Endothelial cell of umbilical vein (primary cell): ENCODE measurements at regions of chr7 and their contacts with region 1.

Region 1: GRCh38 chr7:88789480-88790064 is 6.0 kb downstream of the TEX47 start:
- DNase-seq: peak; percentile 42
- H3K4me3 ChIP-seq: no peak overlapping the region
- H3K27ac ChIP-seq: no peak overlapping the region
- H3K4me1 ChIP-seq: no peaks in the 10 kb centered on the region
- H3K27me3 ChIP-seq: peaks cover 2 to 3% of the 10 kb centered on the region in 2 experiments
- CTCF ChIP-seq: peak; percentile 14 to 24
- POLR2A ChIP-seq: no peak

Region 2: DNA sequence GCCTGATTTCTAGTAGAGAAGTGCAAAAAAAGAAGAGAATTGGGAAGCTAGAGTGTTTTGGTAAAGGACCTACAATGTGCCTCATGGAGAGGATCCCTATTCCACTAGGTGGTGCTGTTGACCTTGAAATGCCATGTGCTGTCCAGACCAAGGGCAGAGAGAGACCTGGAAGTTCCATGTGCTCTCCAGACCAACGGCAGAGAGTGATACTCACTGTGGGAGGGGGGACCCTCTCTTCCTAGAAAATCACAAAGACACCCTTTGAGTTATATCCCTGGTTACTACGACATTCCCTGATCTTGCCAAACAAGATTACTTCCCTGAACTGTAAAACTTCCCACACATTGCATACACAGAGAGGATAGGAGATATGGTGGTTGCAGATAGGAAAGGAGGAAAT is 242.8 kb before region 1 on chr7:
- CTCF ChIA-PET with region 1: interaction called, 6 read pairs
- POLR2A ChIA-PET with region 1: no interaction called
- dilution Hi-C with region 1: no loop called
- intact Hi-C with region 1: loop called (anchors 5 kb)
- DNase-seq: peak; percentile 68
- H3K4me3 ChIP-seq: no peak overlapping the region
- H3K27ac ChIP-seq: no peak overlapping the region
- H3K4me1 ChIP-seq: no peaks in the 10 kb centered on the region
- H3K27me3 ChIP-seq: no peaks in the 10 kb centered on the region
- CTCF ChIP-seq: peak; percentile 62 to 64
- POLR2A ChIP-seq: no peak

Region 3: GRCh38 chr7:88818552-88818951 is 29.0 kb after region 1 on chr7:
- CTCF ChIA-PET with region 1: no interaction called
- POLR2A ChIA-PET with region 1: no interaction called
- dilution Hi-C with region 1: no loop called
- intact Hi-C with region 1: no loop called
- DNase-seq: no peak
- H3K4me3 ChIP-seq: no peak overlapping the region
- H3K27ac ChIP-seq: no peak overlapping the region
- H3K4me1 ChIP-seq: no peaks in the 10 kb centered on the region
- H3K27me3 ChIP-seq: no peaks in the 10 kb centered on the region
- CTCF ChIP-seq: no peak
- POLR2A ChIP-seq: no peak

Region 4: GRCh38 chr7:89772276-89772675 is 982.7 kb after region 1 on chr7:
- CTCF ChIA-PET with region 1: interaction called, 3 read pairs
- POLR2A ChIA-PET with region 1: no interaction called
- dilution Hi-C with region 1: no loop called
- intact Hi-C with region 1: loop called (anchors 2 kb)
- DNase-seq: no peak
- H3K4me3 ChIP-seq: no peak overlapping the region
- H3K27ac ChIP-seq: no peak overlapping the region
- H3K4me1 ChIP-seq: peaks cover 4% of the 10 kb centered on the region
- H3K27me3 ChIP-seq: no peaks in the 10 kb centered on the region
- CTCF ChIP-seq: no peak
- POLR2A ChIP-seq: no peak

Region 5: GRCh38 chr7:90119178-90119971 is 1329.8 kb after region 1 on chr7:
- CTCF ChIA-PET with region 1: no interaction called
- POLR2A ChIA-PET with region 1: no interaction called
- dilution Hi-C with region 1: no loop called
- intact Hi-C with region 1: loop called (anchors 10 kb)
- DNase-seq: no peak
- H3K4me3 ChIP-seq: peak overlapping the region in 2 of 3 experiments; percentile 2 to 6
- H3K27ac ChIP-seq: no peak overlapping the region
- H3K4me1 ChIP-seq: peaks cover 2% of the 10 kb centered on the region
- H3K27me3 ChIP-seq: peaks cover 13 to 15% of the 10 kb centered on the region in 2 experiments
- CTCF ChIP-seq: no peak
- POLR2A ChIP-seq: no peak